Psoas muscle (tissue), 8 donors: ENCODE measurements at regions of chr14 and their contacts with region 1.

Region 1: DNA sequence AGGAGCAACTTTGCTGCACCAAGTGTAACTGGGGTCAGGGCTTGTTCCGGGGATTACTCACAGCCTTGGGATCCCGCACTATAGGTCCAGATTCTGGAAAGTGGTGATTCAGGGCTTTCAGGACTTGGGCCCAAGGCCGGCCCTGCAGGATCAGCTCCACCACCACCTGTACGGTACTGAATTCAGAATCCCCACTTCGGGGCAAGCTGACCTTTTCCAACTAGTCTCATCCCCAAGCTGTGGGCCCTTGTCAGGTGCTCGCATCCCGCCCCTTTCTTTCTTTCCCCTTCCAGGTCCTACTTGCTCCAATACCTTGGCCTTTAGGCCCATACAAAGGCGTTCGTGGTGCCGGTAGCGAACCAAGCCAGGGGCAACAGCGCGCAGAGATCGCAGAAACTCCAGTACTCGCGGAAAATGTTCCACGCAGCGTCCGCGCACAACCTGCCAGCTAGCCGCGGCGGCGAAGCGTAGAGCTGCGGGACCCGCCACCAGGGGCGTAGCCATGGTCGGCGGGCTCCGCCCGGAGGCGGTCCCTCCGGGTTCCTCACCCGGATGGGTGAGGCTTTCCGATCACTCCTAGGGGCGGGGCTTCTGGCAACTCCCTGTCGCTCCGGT is 487 bp downstream of the TINF2 start:
- DNase-seq: peak; percentile 94 to 97
- ATAC-seq: peak; percentile 87 to 92 (median 90)
- H3K4me3 ChIP-seq: peak overlapping the region; percentile 71
- H3K27ac ChIP-seq: peak overlapping the region; percentile 92
- H3K4me1 ChIP-seq: peaks cover 44% of the 10 kb centered on the region
- H3K27me3 ChIP-seq: no peaks in the 10 kb centered on the region
- CTCF ChIP-seq: peak; percentile 65

Region 2: DNA sequence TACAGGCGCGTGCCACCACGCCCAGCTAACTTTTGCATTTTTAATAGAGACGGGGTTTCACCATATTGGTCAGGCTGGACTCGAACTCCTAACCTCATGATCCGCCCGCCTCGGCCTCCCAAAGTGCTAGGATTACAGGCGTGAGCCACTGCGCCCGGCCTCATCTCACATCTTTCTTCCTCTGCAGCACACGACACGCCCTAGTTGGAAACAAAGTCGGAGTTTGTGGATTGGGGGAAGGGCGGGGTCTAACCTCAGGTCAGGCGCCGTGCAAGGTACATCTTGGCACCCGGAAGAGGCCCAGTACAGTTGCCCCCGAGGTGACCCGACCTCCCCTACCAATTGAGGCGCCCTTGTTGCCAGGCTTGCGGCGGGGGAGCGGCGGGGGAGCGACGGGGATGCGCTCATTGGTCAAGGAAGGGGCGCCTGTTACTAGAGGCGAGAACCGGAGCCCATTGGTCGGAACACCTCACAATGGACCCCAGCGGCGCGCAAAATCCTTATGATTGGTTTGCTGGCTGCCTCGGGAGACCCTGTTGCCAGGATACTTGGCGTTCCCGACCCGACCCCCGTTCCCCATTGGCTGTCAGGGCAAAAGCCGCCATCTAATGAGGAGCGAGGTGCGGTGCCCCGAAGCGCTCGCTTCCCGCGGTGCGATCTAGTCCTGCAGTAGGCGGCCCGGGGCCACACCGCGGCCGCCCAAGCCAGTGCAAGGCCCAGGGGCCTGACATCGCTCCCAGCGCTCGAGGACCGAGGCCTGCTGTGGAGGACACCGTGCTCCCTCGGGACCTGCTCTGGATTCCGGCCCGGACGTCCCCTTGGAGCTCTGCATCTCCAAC is 70.3 kb before region 1 on chr14 and contains the start of gene REC8:
- intact Hi-C with region 1: no loop called
- DNase-seq: peak; percentile 57 to 79
- ATAC-seq: peak; percentile 37 to 69 (median 65)
- H3K4me3 ChIP-seq: peak within 1 kb of the TSS; percentile 40
- H3K27ac ChIP-seq: no peak within 1 kb of the TSS
- H3K4me1 ChIP-seq: peaks cover 11% of the 10 kb centered on the region
- H3K27me3 ChIP-seq: peaks cover 0 to 36% (median 0%) of the 10 kb centered on the region in 3 donors
- CTCF ChIP-seq: no peak
- total RNA-seq, gene REC8: 1.0 to 1.6 (median 1.3) TPM

Region 3: DNA sequence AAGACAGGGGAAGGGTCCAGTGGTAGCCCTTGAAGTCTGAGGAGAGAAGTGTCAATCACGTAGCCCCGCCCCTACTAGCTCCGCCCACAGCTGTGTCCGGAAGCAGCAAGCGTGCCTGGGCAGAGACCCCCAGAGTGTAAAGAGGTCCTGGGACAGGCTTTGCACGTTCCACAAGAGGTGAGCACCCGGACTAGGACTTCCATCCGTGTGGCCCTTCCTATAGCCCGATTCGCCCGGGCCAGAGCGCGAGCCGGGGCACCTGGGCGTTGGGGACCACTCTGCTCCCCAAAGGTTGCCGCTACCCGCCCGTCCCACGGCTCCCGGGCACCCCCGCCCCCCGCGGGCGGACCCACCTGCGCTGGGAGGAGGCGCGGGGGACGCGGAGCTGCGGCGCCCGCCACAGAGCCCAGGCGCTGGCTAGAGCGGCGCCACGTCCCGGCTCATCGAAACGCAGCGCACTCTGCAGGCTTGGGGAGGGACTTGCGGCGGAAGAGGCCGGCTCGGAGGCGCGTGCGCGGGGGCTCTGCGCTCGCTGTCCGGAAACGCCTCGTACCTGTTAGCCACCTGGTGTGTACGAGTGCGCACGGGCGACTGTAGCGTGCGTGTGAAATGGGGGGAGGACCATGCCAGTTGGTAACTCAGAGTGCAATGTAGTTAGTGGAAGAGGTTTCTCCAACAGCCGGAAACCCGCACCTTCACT is 29.3 kb after region 1 on chr14 and contains the start of gene RABGGTA:
- intact Hi-C with region 1: loop called in 1 of 2 experiments (anchors 2 kb)
- DNase-seq: peak; percentile 86 to 92
- ATAC-seq: peak; percentile 95 to 98 (median 98)
- H3K4me3 ChIP-seq: peak within 1 kb of the TSS; percentile 74
- H3K27ac ChIP-seq: peak within 1 kb of the TSS; percentile 92
- H3K4me1 ChIP-seq: no peaks in the 10 kb centered on the region
- H3K27me3 ChIP-seq: no peaks in the 10 kb centered on the region
- CTCF ChIP-seq: peak; percentile 70
- total RNA-seq, gene RABGGTA: 16.9 to 17.8 (median 17.3) TPM

Region 4: DNA sequence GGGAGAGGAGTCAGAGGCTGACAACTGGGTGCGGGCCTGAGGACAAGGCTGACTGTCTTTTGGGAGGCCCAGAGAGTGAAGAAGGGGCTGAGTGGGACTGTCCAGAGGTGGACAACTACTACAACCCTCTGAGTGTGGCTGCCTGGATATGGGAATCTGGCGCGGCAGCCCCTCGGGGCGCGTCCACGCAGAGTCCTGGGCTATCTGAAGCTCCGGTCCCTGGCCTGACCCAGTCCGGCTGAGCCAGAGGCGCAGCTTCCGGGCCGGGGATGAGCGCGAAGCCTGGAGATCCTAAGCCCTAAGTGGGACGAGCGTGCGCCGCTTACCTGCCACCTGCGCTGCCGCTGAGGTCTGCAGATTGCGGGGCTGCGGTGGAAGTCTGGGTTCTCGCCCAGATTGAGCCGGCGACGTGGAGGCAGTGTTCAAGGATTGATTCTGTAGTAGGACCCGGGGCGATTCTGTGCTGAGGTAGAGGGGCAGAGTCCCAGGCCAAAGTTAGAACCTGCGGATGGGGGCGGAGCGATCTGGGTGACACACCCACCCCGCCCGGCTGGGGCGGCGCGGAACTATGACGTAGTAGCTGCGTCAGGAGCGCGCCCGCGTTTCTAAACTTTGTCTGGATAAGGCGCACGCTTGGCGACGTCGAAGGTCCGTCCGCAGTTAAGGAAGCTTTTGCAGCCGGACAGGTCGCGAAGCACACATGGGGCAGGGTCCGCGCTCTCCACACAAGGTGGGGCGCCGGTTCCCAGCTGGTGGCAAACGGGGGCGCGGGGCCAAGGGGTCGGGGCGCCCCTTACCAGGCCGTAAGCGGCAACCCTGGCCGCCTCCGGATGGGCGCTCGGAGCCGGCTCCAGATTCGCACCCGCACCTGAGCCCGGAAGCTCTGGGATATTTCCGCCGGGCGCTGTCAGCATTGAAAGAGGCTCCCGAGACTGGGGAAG is 57.6 kb after region 1 on chr14 and contains the starts of genes DHRS1 and NOP9:
- intact Hi-C with region 1: loop called (anchors 1 to 2 kb)
- DNase-seq: peak; percentile 91 to 95
- ATAC-seq: peak; percentile 91 to 96 (median 94)
- H3K4me3 ChIP-seq: peak within 1 kb of the TSS; percentile 98
- H3K27ac ChIP-seq: peak within 1 kb of the TSS; percentile 90
- H3K4me1 ChIP-seq: peaks cover 27% of the 10 kb centered on the region
- H3K27me3 ChIP-seq: no peaks in the 10 kb centered on the region
- CTCF ChIP-seq: no peak
- total RNA-seq, gene DHRS1: 1.9 to 3.4 (median 2.7) TPM
- total RNA-seq, gene NOP9: 36.7 to 38.8 (median 37.7) TPM